H1 (cell line): ENCODE measurements at regions of chr2 and their contacts with region 1.

Region 1: GRCh38 chr2:1625208-1625937 is 118.9 kb downstream of the PXDN start:
- DNase-seq: peak; percentile 81 to 86
- H3K4me3 ChIP-seq: peak overlapping the region; percentile 25 to 56 (median 33)
- H3K27ac ChIP-seq: peak overlapping the region; percentile 95
- H3K4me1 ChIP-seq: peaks cover 7 to 19% (median 13%) of the 10 kb centered on the region in 4 experiments
- H3K27me3 ChIP-seq: no peaks in the 10 kb centered on the region; a peak in 1 of 7 replicates
- CTCF ChIP-seq: no peak
- EP300 ChIP-seq: peak in 1 of 2 experiments; percentile 97; a peak in 2 of 3 replicates
- POLR2A ChIP-seq: peak; percentile 75 to 90
- RAD21 ChIP-seq: peak in 1 of 2 experiments; percentile 6; a peak in 1 of 4 replicates

Region 2: DNA sequence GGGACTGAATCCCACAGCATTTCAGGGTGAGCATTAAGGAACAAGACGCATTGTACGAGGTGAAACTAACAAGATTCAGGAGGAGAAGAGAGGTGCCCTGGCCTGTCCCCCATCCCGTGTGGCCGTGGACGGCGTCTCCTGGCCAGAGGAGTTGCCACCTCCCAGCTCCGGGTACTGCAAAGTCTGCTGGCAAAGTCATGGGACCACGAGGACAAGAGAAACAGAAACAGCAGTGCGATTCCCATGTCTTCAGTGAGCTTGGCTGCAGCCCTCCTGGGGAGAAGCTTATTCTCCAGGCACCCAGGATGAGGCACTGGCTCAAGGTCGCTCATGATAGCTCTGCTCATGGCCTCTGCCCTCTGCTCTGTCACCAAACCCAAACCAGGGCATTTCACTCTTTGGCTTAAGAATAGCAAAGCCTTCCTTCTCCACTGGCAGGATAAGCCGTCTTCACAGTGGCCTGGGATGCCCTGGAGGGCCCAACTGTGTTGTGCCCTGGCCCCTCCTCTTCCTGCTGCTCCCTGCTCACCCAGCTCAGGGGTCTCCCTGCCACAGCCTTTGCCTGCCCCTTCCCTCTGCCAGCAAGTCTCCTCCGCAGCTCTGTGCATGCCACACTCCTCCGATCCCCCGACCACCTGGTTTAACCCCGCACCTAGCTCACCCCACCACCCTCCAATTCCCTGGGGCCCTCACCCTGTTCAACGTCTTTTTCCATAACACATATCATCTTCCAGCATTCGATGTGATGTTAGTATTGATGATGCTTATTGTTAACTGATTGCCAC is 25.9 kb before region 1 on chr2:
- CTCF ChIA-PET with region 1: interaction called, 8 read pairs
- POLR2A ChIA-PET with region 1: interaction called, 28 read pairs
- DNase-seq: no peak
- H3K4me3 ChIP-seq: no peak overlapping the region
- H3K27ac ChIP-seq: no peak overlapping the region
- H3K4me1 ChIP-seq: peaks cover 0 to 2% (median 0%) of the 10 kb centered on the region in 4 experiments; a peak in 1 of 7 replicates
- H3K27me3 ChIP-seq: no peaks in the 10 kb centered on the region
- CTCF ChIP-seq: no peak
- EP300 ChIP-seq: no peak
- POLR2A ChIP-seq: no peak
- RAD21 ChIP-seq: no peak

Region 3: GRCh38 chr2:1605102-1606045 is 20.0 kb before region 1 on chr2:
- CTCF ChIA-PET with region 1: interaction called, 8 read pairs
- POLR2A ChIA-PET with region 1: interaction called, 28 read pairs
- DNase-seq: peak in 1 of 2 experiments; percentile 61
- H3K4me3 ChIP-seq: no peak overlapping the region
- H3K27ac ChIP-seq: no peak overlapping the region
- H3K4me1 ChIP-seq: peaks cover 0 to 9% (median 5%) of the 10 kb centered on the region in 4 experiments; a peak in 4 of 7 replicates
- H3K27me3 ChIP-seq: no peaks in the 10 kb centered on the region
- CTCF ChIP-seq: no peak
- EP300 ChIP-seq: no peak
- POLR2A ChIP-seq: no peak
- RAD21 ChIP-seq: no peak

Region 4: GRCh38 chr2:1613731-1614354 is 11.5 kb before region 1 on chr2:
- CTCF ChIA-PET with region 1: interaction called, 4 read pairs
- POLR2A ChIA-PET with region 1: interaction called, 57 read pairs
- DNase-seq: no peak
- H3K4me3 ChIP-seq: no peak overlapping the region
- H3K27ac ChIP-seq: no peak overlapping the region
- H3K4me1 ChIP-seq: peaks cover 12 to 30% (median 22%) of the 10 kb centered on the region in 4 experiments
- H3K27me3 ChIP-seq: no peaks in the 10 kb centered on the region
- CTCF ChIP-seq: no peak
- EP300 ChIP-seq: no peak
- POLR2A ChIP-seq: no peak
- RAD21 ChIP-seq: no peak

Region 5: GRCh38 chr2:1641523-1641922 is 16.1 kb after region 1 on chr2:
- CTCF ChIA-PET with region 1: interaction called, 7 read pairs
- POLR2A ChIA-PET with region 1: interaction called, 35 read pairs
- DNase-seq: no peak
- H3K4me3 ChIP-seq: no peak overlapping the region
- H3K27ac ChIP-seq: no peak overlapping the region
- H3K4me1 ChIP-seq: peaks cover 0 to 2% (median 0%) of the 10 kb centered on the region in 4 experiments; a peak in 1 of 7 replicates
- H3K27me3 ChIP-seq: no peaks in the 10 kb centered on the region
- CTCF ChIP-seq: no peak
- EP300 ChIP-seq: no peak
- POLR2A ChIP-seq: no peak
- RAD21 ChIP-seq: no peak

Region 6: GRCh38 chr2:1736997-1737480 is 111.7 kb after region 1 on chr2:
- CTCF ChIA-PET with region 1: no interaction called
- POLR2A ChIA-PET with region 1: interaction called, 11 read pairs
- DNase-seq: no peak
- H3K4me3 ChIP-seq: no peak overlapping the region
- H3K27ac ChIP-seq: no peak overlapping the region
- H3K4me1 ChIP-seq: peaks cover under 1 to 20% (median 4%) of the 10 kb centered on the region in 4 experiments; a peak in 6 of 7 replicates
- H3K27me3 ChIP-seq: no peaks in the 10 kb centered on the region
- CTCF ChIP-seq: no peak
- EP300 ChIP-seq: no peak
- POLR2A ChIP-seq: no peak
- RAD21 ChIP-seq: no peak

Region 7: DNA sequence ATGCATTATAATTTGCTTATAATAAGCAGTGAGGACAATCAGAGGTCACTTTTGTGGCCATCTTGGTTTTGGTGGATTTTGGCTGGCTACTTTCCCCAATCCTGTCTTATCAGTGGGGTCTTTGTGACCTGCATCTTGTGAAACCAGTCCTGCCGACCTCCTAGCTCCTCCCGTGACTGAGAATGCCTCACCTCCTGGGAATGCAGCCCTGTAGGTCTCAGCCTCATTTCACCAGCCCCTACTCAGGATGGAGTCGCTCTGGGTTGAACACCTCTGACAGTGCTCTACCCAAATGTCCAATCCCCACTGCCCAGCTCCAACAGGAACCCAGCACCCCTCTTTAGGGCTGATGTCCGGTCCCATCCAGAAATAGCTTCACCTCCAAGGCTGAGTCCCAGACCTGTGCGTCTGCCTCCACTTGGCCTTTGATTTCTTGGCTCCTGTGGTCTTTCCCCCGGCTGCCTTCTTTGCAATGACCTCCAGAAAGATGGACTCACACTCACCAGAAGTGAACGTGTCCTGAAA is 150.2 kb after region 1 on chr2:
- CTCF ChIA-PET with region 1: no interaction called
- POLR2A ChIA-PET with region 1: no interaction called
- DNase-seq: no peak
- H3K4me3 ChIP-seq: no peak overlapping the region
- H3K27ac ChIP-seq: no peak overlapping the region
- H3K4me1 ChIP-seq: peaks cover 0 to 11% (median 3%) of the 10 kb centered on the region in 4 experiments; a peak in 5 of 7 replicates
- H3K27me3 ChIP-seq: no peaks in the 10 kb centered on the region
- CTCF ChIP-seq: no peak
- EP300 ChIP-seq: no peak
- POLR2A ChIP-seq: no peak
- RAD21 ChIP-seq: no peak